MCF 10A (cell line): ENCODE measurements at regions of chr13 and their contacts with region 1.

Region 1: DNA sequence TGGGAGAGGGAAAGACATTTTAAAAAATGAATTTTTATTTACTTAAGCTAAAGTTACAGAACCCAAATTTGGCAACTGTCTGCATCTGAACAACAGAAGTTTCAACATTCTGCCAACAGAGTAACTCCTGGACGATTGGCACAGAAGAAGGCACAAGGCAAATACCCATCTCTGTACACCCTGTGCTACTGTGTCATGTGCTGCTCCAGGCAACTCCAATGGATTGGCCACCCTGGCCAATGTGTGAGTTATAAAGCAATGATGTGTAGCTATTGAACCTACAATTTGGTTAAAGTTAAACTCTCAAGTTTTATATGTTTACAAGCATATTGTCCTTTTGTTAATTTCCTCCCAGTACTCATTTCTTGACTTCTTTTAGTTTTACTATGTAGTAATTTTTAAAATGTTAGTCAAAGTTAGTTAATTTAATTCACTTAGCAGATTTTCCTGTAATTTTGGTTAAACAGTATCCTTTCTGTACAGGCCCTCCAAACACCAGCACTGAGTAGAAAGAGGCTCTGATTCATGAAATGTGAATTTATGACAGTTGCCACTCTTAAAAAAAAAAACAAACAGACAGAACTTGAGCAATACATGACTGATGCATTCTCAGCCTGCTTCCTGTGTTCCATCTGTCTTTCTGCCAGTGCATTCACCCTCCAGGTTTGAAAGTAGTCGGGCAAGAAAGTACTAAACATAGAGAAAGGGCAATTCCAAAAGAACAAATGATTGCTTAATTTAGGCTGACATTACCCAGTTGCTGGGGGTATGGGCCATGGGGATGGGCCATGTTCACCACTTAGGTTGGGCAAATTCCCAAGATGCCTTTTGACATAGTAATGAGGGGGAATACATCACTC is 5.9 kb downstream of the STARD13 start:
- DNase-seq: peak; percentile 94
- H3K4me3 Mint-ChIP-seq: peak overlapping the region; percentile 91
- H3K27ac Mint-ChIP-seq: peak overlapping the region; percentile 95
- H3K4me1 Mint-ChIP-seq: peaks cover 67% of the 10 kb centered on the region
- H3K27me3 Mint-ChIP-seq: no peaks in the 10 kb centered on the region
- CTCF ChIP-seq: no peak

Region 2: GRCh38 chr13:33125821-33126570 is 153.6 kb before region 1 on chr13:
- CTCF ChIA-PET with region 1: no interaction called
- POLR2A ChIA-PET with region 1: interaction called, 13 read pairs
- intact Hi-C with region 1: loop called (anchors 1 kb)
- DNase-seq: peak; percentile 94
- H3K4me3 Mint-ChIP-seq: peak overlapping the region; percentile 4
- H3K27ac Mint-ChIP-seq: peak overlapping the region; percentile 79
- H3K4me1 Mint-ChIP-seq: peaks cover 26% of the 10 kb centered on the region
- H3K27me3 Mint-ChIP-seq: no peaks in the 10 kb centered on the region
- CTCF ChIP-seq: no peak

Region 3: DNA sequence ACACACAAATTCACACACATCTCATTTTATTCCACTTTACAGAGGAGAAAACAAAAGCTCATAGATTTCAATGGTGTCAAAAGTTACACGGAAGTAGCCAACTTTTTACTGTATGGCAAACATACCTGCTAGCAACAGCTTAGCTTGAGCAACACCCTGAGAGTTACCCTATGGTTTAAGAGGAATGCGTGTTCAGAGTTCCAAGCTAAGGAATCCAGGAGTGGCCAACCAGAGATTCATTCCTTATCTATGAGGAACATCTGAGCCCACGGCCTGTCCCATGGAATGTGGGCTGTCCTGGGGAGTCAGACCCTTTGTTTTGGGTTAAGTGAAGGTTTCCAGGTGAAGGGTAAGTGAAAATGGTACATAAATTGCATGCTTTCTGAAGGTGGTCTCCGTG is 61.6 kb before region 1 on chr13:
- CTCF ChIA-PET with region 1: no interaction called
- POLR2A ChIA-PET with region 1: interaction called, 97 read pairs
- intact Hi-C with region 1: no loop called
- DNase-seq: peak; percentile 62
- H3K4me3 Mint-ChIP-seq: peak overlapping the region; percentile 37
- H3K27ac Mint-ChIP-seq: peak overlapping the region; percentile 94
- H3K4me1 Mint-ChIP-seq: peaks cover 67% of the 10 kb centered on the region
- H3K27me3 Mint-ChIP-seq: no peaks in the 10 kb centered on the region
- CTCF ChIP-seq: no peak

Region 4: DNA sequence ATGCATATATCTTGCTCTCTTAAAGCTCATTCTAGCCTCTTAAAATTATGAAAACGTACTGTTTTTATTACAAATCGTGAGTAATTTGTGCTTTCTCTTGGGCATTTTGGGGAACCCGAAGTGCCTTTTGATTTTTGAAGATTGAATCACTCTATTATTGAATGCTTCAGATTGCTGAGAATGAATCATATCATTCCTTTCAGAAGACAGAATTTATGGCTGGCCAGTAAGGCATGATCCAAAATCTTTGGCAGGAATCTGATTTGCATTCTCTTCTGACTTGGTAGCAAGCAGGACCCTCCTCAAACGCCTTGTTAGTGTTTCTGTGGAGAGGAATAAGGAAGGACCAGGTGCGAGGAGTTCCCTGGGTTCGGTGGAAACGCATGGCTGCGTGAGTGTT is 43.6 kb before region 1 on chr13:
- CTCF ChIA-PET with region 1: interaction called, 3 read pairs
- POLR2A ChIA-PET with region 1: interaction called, 97 read pairs
- intact Hi-C with region 1: loop called (anchors 1 kb)
- DNase-seq: peak; percentile 51
- H3K4me3 Mint-ChIP-seq: peak overlapping the region; percentile 42
- H3K27ac Mint-ChIP-seq: peak overlapping the region; percentile 67
- H3K4me1 Mint-ChIP-seq: peaks cover 56% of the 10 kb centered on the region
- H3K27me3 Mint-ChIP-seq: no peaks in the 10 kb centered on the region
- CTCF ChIP-seq: no peak

Region 5: DNA sequence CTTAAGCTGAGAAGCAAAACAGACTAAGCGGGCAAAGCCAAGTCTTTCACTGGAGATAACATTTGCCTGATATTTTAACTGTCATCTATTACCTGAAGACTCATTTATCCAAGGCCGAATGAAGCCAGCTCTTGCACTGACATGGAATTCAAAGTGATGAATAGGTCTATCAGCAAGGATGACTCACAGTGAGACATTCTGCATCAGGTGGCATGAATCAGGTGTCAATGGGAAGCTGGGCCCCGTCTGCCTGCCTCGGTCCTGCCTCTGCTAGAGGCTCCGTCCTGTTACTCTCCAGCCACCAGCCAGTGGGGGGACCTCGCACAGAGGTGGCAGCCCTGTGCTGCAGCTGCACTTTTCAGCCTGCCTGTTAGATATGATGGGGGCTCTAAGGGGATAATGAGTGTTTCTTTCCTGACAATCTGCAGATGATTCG is 17.6 kb before region 1 on chr13:
- CTCF ChIA-PET with region 1: interaction called, 3 read pairs
- POLR2A ChIA-PET with region 1: interaction called, 192 read pairs
- intact Hi-C with region 1: loop called (anchors 2 kb)
- DNase-seq: peak; percentile 85
- H3K4me3 Mint-ChIP-seq: no peak overlapping the region
- H3K27ac Mint-ChIP-seq: peak overlapping the region; percentile 64
- H3K4me1 Mint-ChIP-seq: peaks cover 87% of the 10 kb centered on the region
- H3K27me3 Mint-ChIP-seq: no peaks in the 10 kb centered on the region
- CTCF ChIP-seq: no peak